ENCODE measurements at regions of chr3 and their contacts with region 1.

Region 1: GRCh38 chr3:129893581-129894070 is at the start of gene TMCC1:
- DNase-seq: peak; percentile 83 to 96
- H3K4me3 ChIP-seq: peak within 1 kb of the TSS; percentile 100
- H3K27ac ChIP-seq: peak within 1 kb of the TSS; percentile 88
- H3K4me1 ChIP-seq: peaks cover 41% of the 10 kb centered on the region
- H3K27me3 ChIP-seq: no peaks in the 10 kb centered on the region
- CTCF ChIP-seq: no peak
- total RNA-seq, gene TMCC1: 41.4 and 48.1 TPM in 2 replicates

Region 2: GRCh38 chr3:129614927-129615363 is 278.7 kb before region 1 on chr3:
- CTCF ChIA-PET with region 1: no interaction called
- POLR2A ChIA-PET with region 1: interaction called, 10 read pairs
- intact Hi-C with region 1: no loop called
- DNase-seq: no peak
- H3K4me3 ChIP-seq: no peak overlapping the region
- H3K27ac ChIP-seq: no peak overlapping the region
- H3K4me1 ChIP-seq: no peaks in the 10 kb centered on the region
- H3K27me3 ChIP-seq: no peaks in the 10 kb centered on the region
- CTCF ChIP-seq: no peak

Region 3: DNA sequence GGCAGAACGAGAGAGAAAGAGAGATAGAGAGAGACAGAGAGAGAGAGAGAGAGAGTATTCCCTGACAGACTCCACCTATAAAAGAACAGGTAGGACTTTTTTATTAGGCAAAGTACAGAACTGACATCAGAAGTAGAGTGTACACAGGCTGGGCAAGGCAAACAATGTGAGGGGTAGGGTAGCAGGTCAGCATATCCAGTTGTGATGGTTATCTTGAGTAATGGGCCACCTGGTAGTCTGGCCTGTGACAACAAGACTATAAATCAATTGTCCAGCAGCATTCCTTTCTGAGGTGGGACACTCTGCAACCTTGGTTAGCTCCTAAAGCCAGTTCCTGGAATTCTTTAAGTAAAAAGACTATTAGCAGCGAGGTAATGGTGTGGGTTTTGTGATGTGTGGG is 14.8 kb after region 1 on chr3:
- CTCF ChIA-PET with region 1: interaction called, 6 read pairs
- POLR2A ChIA-PET with region 1: interaction called, 7 read pairs
- intact Hi-C with region 1: loop called (anchors 1 kb)
- DNase-seq: peak; percentile 74 to 95
- H3K4me3 ChIP-seq: peak overlapping the region; percentile 38; the same call in 1 of the 2 replicates
- H3K27ac ChIP-seq: peak overlapping the region; percentile 72
- H3K4me1 ChIP-seq: peaks cover 27% of the 10 kb centered on the region
- H3K27me3 ChIP-seq: no peaks in the 10 kb centered on the region
- CTCF ChIP-seq: no peak

Measured in PC-9 (cell line).